Posterior cingulate gyrus (tissue), 11 donors: ENCODE measurements at regions of chr2 and their contacts with region 1.

Region 1: GRCh38 chr2:235595422-235596010 is 101.7 kb downstream of the AGAP1 start:
- DNase-seq: peak; percentile 62 to 96 (median 82)

Region 2: GRCh38 chr2:235135990-235136561 is 459.4 kb before region 1 on chr2:
- intact Hi-C with region 1: loop called (anchors 1 kb)
- DNase-seq: peak; percentile 44 to 96 (median 84)

Region 3: GRCh38 chr2:235433860-235434259 is 161.7 kb before region 1 on chr2:
- intact Hi-C with region 1: loop called (anchors 2 kb)
- DNase-seq: peak in 5 of 10 donors; percentile 36 to 86 (median 58)

Region 4: GRCh38 chr2:235493775-235494715 is 101.5 kb before region 1 on chr2 and contains the start of gene AGAP1:
- intact Hi-C with region 1: loop called (anchors 5 kb)
- DNase-seq: peak; percentile 82 to 99 (median 90)

Region 5: DNA sequence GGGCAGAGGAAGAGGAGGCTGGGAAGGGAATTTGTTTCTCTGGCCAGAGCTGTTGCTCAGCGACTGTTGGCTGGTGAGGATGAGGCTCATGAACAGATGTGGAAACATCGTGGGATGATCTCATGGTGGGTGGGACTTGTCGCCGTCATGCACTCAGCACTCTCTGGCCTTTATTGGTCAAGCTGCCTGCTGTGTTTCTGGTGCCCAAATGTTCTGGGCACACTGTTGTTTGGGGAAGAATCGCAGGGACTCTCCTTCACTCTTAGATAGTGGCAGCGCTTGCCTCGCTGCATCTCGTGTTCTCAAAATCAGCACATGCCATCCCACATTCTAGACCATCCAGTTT is 43.9 kb after region 1 on chr2:
- intact Hi-C with region 1: loop called (anchors 5 kb)
- DNase-seq: peak; percentile 71 to 97 (median 86)

Region 6: DNA sequence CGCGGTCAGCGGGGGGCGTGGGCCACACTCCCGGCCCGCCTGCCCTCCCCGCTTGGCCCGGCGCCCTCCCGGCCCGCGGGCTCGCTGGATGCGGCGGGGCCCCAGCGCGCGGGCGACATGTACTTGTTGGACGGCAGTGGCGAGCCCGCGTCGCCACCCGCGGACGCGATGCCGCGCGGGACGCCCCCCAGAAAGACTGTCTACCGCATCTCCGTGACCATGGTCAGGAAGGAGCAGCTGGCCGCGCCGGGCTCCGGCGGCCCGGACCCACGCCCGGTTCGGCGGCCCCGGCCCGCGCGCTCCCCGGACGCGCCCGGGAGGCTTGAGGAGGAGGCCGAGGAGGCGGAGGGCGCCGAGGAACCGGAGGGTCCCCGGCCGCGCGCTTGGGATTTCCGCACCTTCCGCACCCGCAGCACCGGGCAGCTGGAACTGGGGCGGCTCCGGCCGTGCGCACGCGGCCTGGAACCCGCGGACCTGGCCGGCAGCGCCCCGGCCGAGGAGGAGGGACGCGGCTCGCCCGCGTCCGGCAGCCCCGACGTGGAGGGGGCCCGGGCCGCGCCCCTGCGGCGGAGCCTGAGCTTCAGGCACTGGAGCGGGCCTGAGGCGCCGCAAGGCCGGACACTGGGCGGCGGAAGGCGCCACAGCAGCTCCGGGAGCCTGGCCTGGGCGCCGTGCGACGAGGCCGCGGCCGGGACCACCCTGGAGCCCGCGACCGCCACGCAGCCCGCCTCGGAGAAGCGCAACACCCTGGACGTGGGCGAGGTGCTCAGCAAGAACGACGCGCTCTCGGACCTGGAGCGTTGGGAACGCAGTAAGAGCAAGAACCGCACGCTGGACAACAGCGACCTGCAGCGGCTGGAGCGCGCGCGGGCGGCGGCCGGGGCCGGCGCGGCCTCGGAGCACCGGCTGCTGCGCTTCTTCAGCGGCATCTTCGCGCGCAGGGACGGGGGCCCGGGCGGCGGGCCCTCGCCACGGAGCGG is 74.8 kb after region 1 on chr2:
- intact Hi-C with region 1: loop called (anchors 1 kb)
- DNase-seq: peak; percentile 49 to 96 (median 70)

Region 7: GRCh38 chr2:235746257-235747084 is 151.0 kb after region 1 on chr2:
- intact Hi-C with region 1: loop called (anchors 2 kb)
- DNase-seq: peak in 7 of 10 donors; percentile 56 to 93 (median 74)

Region 8: DNA sequence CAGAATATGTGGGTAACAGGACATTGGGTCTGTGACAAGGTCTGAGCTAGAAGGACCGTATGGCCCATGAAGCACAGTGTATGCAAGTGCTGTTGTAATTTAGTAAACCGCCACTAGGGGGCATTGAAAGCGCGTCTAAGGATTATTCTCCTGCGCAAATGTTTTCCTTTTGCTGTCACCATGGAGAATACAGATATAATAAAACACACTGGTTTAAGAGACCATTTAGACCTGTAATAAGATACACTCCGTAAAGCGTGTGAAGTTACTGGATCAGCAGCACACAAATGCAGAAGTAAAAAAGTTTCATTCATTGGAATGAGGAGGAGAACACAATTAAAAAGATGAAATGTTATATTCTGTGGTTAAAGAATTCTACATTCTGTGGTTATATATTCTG is 170.8 kb after region 1 on chr2:
- intact Hi-C with region 1: no loop called
- DNase-seq: peak in 5 of 10 donors; percentile 47 to 87 (median 60)

Region 9: GRCh38 chr2:235779444-235779896 is 184.0 kb after region 1 on chr2:
- intact Hi-C with region 1: no loop called
- DNase-seq: peak; percentile 44 to 96 (median 80)